ENCODE measurements at regions of chr17 and their contacts with region 1.

Region 1: GRCh38 chr17:59311130-59311920 is 20.1 kb upstream of the YPEL2 start:
- DNase-seq: peak; percentile 54
- H3K4me3 Mint-ChIP-seq: no peak overlapping the region
- H3K27ac Mint-ChIP-seq: no peak overlapping the region
- H3K4me1 Mint-ChIP-seq: peaks cover 7% of the 10 kb centered on the region
- H3K27me3 Mint-ChIP-seq: peaks cover 7% of the 10 kb centered on the region

Region 2: GRCh38 chr17:59440784-59441441 is 129.6 kb after region 1 on chr17:
- CTCF ChIA-PET with region 1: interaction called, 90 read pairs
- DNase-seq: peak; percentile 93
- H3K4me3 Mint-ChIP-seq: peak overlapping the region; percentile 24
- H3K27ac Mint-ChIP-seq: peak overlapping the region; percentile 33
- H3K4me1 Mint-ChIP-seq: peaks cover 51% of the 10 kb centered on the region
- H3K27me3 Mint-ChIP-seq: no peaks in the 10 kb centered on the region

Region 3: GRCh38 chr17:59521204-59522126 is 210.1 kb after region 1 on chr17:
- CTCF ChIA-PET with region 1: interaction called, 10 read pairs
- DNase-seq: peak; percentile 73
- H3K4me3 Mint-ChIP-seq: no peak overlapping the region
- H3K27ac Mint-ChIP-seq: no peak overlapping the region
- H3K4me1 Mint-ChIP-seq: peaks cover 4% of the 10 kb centered on the region
- H3K27me3 Mint-ChIP-seq: peaks cover 32% of the 10 kb centered on the region